Activated T-helper 2 cell treated with anti-CD3 and anti-CD28 coated beads, Interferon-gamma antibody, Interleukin-2, Interleukin-4, amounts not matched to agents 10 μg/mL and 5 μg/mL and 100 μg/mL, durations not matched to agents 14 hours and 24 hours and 36 hours (primary cell): ENCODE measurements at regions of chr4 and their contacts with region 1.

Region 1: GRCh38 chr4:71009890-71010588 is 16.6 kb downstream of the DCK start:
- DNase-seq: no peak
- H3K4me3 Mint-ChIP-seq: no peak overlapping the region
- H3K27ac Mint-ChIP-seq: peak overlapping the region; percentile 67
- H3K4me1 Mint-ChIP-seq: peaks cover 36% of the 10 kb centered on the region
- H3K27me3 Mint-ChIP-seq: no peaks in the 10 kb centered on the region

Region 2: GRCh38 chr4:70480650-70481049 is 529.4 kb before region 1 on chr4:
- intact Hi-C with region 1: no loop called
- DNase-seq: no peak
- H3K4me3 Mint-ChIP-seq: no peak overlapping the region
- H3K27ac Mint-ChIP-seq: no peak overlapping the region
- H3K4me1 Mint-ChIP-seq: no peaks in the 10 kb centered on the region
- H3K27me3 Mint-ChIP-seq: no peaks in the 10 kb centered on the region

Region 3: DNA sequence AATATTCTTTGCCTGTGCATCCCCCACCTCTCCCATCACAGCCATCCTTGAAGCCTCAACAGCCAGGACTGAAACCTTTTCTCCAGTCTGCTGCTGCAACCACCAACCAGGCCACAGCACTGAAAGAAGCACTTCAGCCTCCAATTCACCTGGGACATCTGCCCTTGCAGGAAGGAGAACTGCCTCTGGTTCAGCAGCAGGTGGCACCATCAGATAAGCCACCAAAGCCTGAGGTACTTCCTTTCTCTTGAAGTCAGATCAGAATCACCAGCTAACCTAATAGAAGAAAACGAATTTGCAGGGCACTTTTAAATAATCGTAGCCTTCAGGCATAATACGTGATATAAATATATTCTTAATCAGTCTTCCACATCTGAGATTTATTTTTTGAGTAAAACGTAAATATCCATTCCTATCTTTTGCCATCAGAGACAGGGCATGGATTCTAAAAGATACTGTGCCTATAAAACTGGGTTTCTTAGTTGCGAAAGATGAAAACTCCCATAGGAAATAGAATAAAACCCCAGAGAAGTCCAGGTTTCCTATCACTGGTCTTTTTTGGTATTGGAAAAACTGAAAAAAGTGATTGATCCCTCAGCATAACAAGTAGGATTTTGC is 408.5 kb before region 1 on chr4:
- intact Hi-C with region 1: loop called (anchors 1 kb)
- DNase-seq: peak; percentile 49
- H3K4me3 Mint-ChIP-seq: no peak overlapping the region
- H3K27ac Mint-ChIP-seq: no peak overlapping the region
- H3K4me1 Mint-ChIP-seq: no peaks in the 10 kb centered on the region
- H3K27me3 Mint-ChIP-seq: peaks cover 17% of the 10 kb centered on the region

Region 4: GRCh38 chr4:70619288-70619687 is 390.8 kb before region 1 on chr4:
- intact Hi-C with region 1: loop called (anchors 5 kb)
- DNase-seq: no peak
- H3K4me3 Mint-ChIP-seq: no peak overlapping the region
- H3K27ac Mint-ChIP-seq: no peak overlapping the region
- H3K4me1 Mint-ChIP-seq: no peaks in the 10 kb centered on the region
- H3K27me3 Mint-ChIP-seq: peaks cover 7% of the 10 kb centered on the region

Region 5: GRCh38 chr4:70734168-70734954 is 275.7 kb before region 1 on chr4:
- intact Hi-C with region 1: loop called (anchors 10 kb)
- DNase-seq: peak; percentile 41
- H3K4me3 Mint-ChIP-seq: peak overlapping the region; percentile 74
- H3K27ac Mint-ChIP-seq: peak overlapping the region; percentile 79
- H3K4me1 Mint-ChIP-seq: peaks cover 40% of the 10 kb centered on the region
- H3K27me3 Mint-ChIP-seq: no peaks in the 10 kb centered on the region

Region 6: GRCh38 chr4:70993181-70994068 is 16.6 kb before region 1 on chr4 and contains the start of gene DCK:
- intact Hi-C with region 1: loop called (anchors 1 kb)
- DNase-seq: peak; percentile 83
- H3K4me3 Mint-ChIP-seq: peak within 1 kb of the TSS; percentile 99
- H3K27ac Mint-ChIP-seq: peak within 1 kb of the TSS; percentile 93
- H3K4me1 Mint-ChIP-seq: peaks cover 39% of the 10 kb centered on the region
- H3K27me3 Mint-ChIP-seq: no peaks in the 10 kb centered on the region
- total RNA-seq, gene DCK: 35.1 and 35.3 TPM in 2 replicates

Region 7: DNA sequence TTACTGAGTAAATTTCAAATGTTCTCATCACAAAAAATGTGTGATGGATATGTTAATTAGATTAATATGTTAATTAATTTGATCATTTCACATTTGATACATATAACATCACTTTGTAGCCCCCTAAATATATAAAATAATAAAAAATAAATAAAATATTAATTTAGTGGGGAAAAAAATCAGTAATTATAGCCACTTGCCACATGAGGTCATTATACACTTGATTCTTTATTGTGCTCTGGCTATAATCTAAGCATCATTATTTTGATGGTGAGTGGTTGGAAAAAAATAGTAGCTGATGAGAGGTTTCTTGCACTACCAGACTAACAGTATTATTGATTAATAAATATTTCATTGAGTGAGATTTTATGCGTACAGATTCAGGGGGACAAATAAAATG is 40.8 kb after region 1 on chr4:
- intact Hi-C with region 1: no loop called
- DNase-seq: no peak
- H3K4me3 Mint-ChIP-seq: no peak overlapping the region
- H3K27ac Mint-ChIP-seq: no peak overlapping the region
- H3K4me1 Mint-ChIP-seq: no peaks in the 10 kb centered on the region
- H3K27me3 Mint-ChIP-seq: no peaks in the 10 kb centered on the region